Esophagus muscularis mucosa (tissue), 4 donors: ENCODE measurements at regions of chr2 and their contacts with region 1.

Region 1: GRCh38 chr2:102753563-102754159 is 8.2 kb upstream of the TMEM182 start:
- DNase-seq: no peak
- H3K4me3 ChIP-seq: no peak overlapping the region
- H3K27ac ChIP-seq: no peak overlapping the region
- H3K4me1 ChIP-seq: peaks cover 0 to 22% (median 11%) of the 10 kb centered on the region in 4 donors
- H3K27me3 ChIP-seq: no peaks in the 10 kb centered on the region
- CTCF ChIP-seq: peak; percentile 53 to 81 (median 77)
- EP300 ChIP-seq: no peak
- POLR2A ChIP-seq: no peak

Region 2: DNA sequence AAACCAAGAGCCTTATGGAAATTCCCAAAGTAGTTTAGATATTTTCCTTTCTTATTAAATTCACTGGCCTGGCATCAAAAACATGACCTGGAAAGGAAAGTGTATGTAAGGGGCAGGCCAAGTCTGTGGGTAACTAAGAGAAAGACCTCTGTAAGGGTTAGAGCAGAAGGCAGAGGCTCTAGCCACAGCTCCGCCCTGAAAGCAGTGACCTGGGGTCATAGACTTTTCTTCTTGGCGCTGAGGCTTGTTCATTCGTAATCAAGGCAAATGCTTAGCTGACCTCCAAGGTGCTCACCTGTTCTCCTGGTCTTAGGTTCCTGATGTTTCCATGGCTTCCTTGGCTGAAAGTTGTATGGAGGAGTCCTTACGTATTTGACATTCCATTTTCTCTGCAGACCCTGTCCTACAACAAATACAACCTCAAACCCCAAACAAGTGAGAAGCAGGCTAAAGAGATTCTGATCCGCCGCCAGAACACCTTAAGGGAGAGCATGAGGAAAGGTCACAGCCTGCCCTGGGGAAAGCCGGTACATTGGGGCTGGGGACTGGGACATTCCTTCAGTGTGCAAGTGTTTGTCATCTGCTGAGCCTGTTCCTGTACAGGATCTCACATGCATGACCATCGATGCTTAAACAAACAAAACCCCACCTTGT is 228.9 kb before region 1 on chr2:
- intact Hi-C with region 1: no loop called
- DNase-seq: peak; percentile 64
- H3K4me3 ChIP-seq: no peak overlapping the region
- H3K27ac ChIP-seq: no peak overlapping the region
- H3K4me1 ChIP-seq: no peaks in the 10 kb centered on the region
- H3K27me3 ChIP-seq: no peaks in the 10 kb centered on the region
- CTCF ChIP-seq: no peak
- EP300 ChIP-seq: no peak
- POLR2A ChIP-seq: no peak

Region 3: DNA sequence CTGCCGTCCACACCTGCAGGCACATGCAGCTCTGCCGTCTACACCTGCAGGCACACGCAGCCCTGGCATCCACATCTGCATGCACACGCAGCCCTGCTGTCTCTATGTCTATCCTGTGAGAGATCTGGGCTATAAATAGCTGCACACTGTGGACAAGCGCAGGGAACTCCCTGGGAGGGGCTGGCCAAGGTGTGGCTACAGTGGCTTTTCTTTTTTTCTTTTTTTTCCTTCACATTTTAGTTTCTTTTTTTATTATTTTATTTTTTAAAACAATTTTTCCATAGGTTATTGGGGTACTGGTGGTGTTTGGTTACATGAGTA is 50.2 kb after region 1 on chr2:
- intact Hi-C with region 1: loop called (anchors 2 kb)
- DNase-seq: no peak
- H3K4me3 ChIP-seq: no peak overlapping the region
- H3K27ac ChIP-seq: no peak overlapping the region
- H3K4me1 ChIP-seq: peaks cover 0 to 7% (median 4%) of the 10 kb centered on the region in 4 donors
- H3K27me3 ChIP-seq: no peaks in the 10 kb centered on the region
- CTCF ChIP-seq: no peak
- EP300 ChIP-seq: no peak
- POLR2A ChIP-seq: no peak